T-cell (primary cell): ENCODE measurements at regions of chr15 and their contacts with region 1.

Region 1: DNA sequence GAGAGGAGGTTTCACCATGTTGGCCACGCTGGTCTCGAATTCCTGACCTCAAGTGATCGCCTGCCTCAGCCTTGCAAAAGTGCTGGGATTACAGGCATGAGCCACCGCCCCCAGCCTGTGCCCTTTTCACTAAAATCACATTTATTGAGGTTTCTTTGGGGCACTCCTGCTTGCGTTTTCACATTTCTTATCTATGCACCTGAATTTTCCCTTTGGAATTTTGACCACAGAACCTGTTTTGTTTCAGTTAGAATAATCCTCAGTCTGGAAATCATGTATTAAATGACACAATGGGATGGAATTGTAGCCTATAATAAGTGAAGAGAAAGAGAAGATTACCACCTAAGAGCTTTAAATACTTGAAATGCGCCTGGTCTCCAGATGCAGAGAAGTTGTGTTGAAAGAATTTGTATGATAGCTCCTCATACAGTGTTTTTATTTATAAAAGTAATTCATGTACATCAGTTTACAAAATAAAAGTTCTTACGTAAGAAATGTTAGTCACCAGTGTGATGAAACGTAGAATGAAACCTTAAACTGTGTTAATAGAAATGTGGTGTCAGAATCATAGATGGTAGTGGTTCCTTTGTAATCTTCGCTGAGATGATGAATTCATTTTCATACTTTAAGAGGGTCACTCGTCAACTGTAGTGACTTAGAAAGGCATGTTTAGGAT is 107.0 kb downstream of the TCF12 start:
- DNase-seq: no peak
- ATAC-seq: no peak
- H3K4me3 ChIP-seq: no peak overlapping the region
- H3K4me3 Mint-ChIP-seq: no peak overlapping the region
- H3K27ac ChIP-seq: no peak overlapping the region
- H3K27ac Mint-ChIP-seq: no peak overlapping the region
- H3K4me1 ChIP-seq: peaks cover 3 to 5% of the 10 kb centered on the region in 2 experiments
- H3K4me1 Mint-ChIP-seq: peaks cover 49 to 61% (median 52%) of the 10 kb centered on the region in 3 donors
- H3K27me3 ChIP-seq: no peaks in the 10 kb centered on the region
- H3K27me3 Mint-ChIP-seq: no peaks in the 10 kb centered on the region

Region 2: GRCh38 chr15:57054204-57054750 is 28.9 kb after region 1 on chr15:
- CTCF ChIA-PET with region 1: no interaction called
- POLR2A ChIA-PET with region 1: interaction called in 1 of 2 experiments, 14 read pairs
- DNase-seq: no peak
- ATAC-seq: no peak
- H3K4me3 ChIP-seq: no peak overlapping the region
- H3K4me3 Mint-ChIP-seq: no peak overlapping the region
- H3K27ac ChIP-seq: no peak overlapping the region
- H3K27ac Mint-ChIP-seq: no peak overlapping the region
- H3K4me1 ChIP-seq: peaks cover 2 to 9% of the 10 kb centered on the region in 2 experiments
- H3K4me1 Mint-ChIP-seq: peaks cover 65 to 83% (median 76%) of the 10 kb centered on the region in 3 donors
- H3K27me3 ChIP-seq: no peaks in the 10 kb centered on the region
- H3K27me3 Mint-ChIP-seq: no peaks in the 10 kb centered on the region